B cell (primary cell): ENCODE measurements at regions of chr11 and their contacts with region 1.

Region 1: DNA sequence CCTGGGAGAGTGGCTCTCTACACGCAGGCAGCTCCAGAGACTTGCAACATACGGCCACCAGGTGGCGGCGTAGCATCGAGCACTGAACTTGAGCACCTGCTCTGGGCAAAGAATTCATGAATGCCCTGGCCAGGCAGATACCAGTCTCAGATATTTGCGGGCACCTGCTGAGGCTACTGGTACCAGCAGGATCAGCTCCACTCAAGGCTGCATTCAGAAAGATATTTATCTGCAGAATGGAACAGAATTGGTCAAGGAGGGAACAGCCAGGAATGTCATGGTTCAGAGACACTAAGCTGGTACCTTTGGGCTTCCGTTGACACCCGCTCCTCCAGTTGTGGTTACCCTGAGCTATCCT is 10.8 kb upstream of the CCDC86 start:
- DNase-seq: peak; percentile 85
- ATAC-seq: peak; percentile 86
- H3K4me3 ChIP-seq: peak overlapping the region in 1 of 5 experiments; percentile 3
- H3K4me3 Mint-ChIP-seq: no peak overlapping the region
- H3K27ac ChIP-seq: no peak overlapping the region
- H3K27ac Mint-ChIP-seq: no peak overlapping the region
- H3K4me1 ChIP-seq: peaks cover 0 to 5% of the 10 kb centered on the region in 2 donors
- H3K4me1 Mint-ChIP-seq: peaks cover 5% of the 10 kb centered on the region
- H3K27me3 ChIP-seq: peaks cover 0 to 8% (median 0%) of the 10 kb centered on the region in 4 experiments
- H3K27me3 Mint-ChIP-seq: peaks cover 20% of the 10 kb centered on the region
- CTCF ChIP-seq: peak; percentile 96

Region 2: GRCh38 chr11:60756307-60757032 is 74.7 kb before region 1 on chr11 and contains the start of gene MS4A15:
- CTCF ChIA-PET with region 1: no interaction called
- POLR2A ChIA-PET with region 1: no interaction called
- intact Hi-C with region 1: no loop called
- DNase-seq: peak; percentile 55
- ATAC-seq: no peak
- H3K4me3 ChIP-seq: no peak within 1 kb of the TSS
- H3K4me3 Mint-ChIP-seq: no peak within 1 kb of the TSS
- H3K27ac ChIP-seq: no peak within 1 kb of the TSS
- H3K27ac Mint-ChIP-seq: no peak within 1 kb of the TSS
- H3K4me1 ChIP-seq: peaks cover 3 to 4% of the 10 kb centered on the region in 2 donors
- H3K4me1 Mint-ChIP-seq: peaks cover 23% of the 10 kb centered on the region
- H3K27me3 ChIP-seq: peaks cover 0 to 7% (median 1%) of the 10 kb centered on the region in 4 experiments
- H3K27me3 Mint-ChIP-seq: peaks cover 36% of the 10 kb centered on the region
- CTCF ChIP-seq: peak; percentile 58
- total RNA-seq, gene MS4A15: not detected in 2 replicates

Region 3: DNA sequence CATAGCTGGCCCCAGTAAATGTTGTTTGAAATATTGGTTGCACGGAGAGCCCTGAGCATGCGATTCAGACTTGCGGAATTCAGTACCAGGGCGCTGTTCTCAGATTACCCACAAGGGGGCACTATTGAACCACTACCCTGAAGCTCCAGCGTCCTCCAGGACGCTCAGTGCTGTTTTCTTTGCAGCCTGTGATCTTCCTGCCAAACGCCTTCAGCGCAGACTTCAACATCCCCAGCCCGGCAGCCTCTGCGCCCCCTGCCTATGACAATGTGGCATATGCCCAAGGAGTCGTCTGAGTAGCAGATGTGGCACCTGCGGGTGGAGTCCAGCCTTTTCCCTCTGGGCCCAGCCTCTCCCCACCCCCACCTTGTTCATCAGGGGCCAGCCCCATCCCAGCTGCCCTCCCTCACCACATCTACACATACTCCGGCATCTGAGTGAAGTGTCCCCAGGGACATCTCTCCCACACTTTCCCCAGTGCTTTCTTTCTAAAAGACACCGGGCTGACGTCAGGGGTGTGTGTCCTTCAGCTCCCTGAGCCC is 55.6 kb before region 1 on chr11:
- CTCF ChIA-PET with region 1: interaction called, 19 read pairs
- POLR2A ChIA-PET with region 1: no interaction called
- intact Hi-C with region 1: no loop called
- DNase-seq: peak; percentile 89
- ATAC-seq: peak; percentile 96
- H3K4me3 ChIP-seq: no peak overlapping the region
- H3K4me3 Mint-ChIP-seq: no peak overlapping the region
- H3K27ac ChIP-seq: no peak overlapping the region
- H3K27ac Mint-ChIP-seq: peak overlapping the region; percentile 1
- H3K4me1 ChIP-seq: peaks cover 3 to 11% of the 10 kb centered on the region in 2 donors
- H3K4me1 Mint-ChIP-seq: peaks cover 15% of the 10 kb centered on the region
- H3K27me3 ChIP-seq: peaks cover 0 to 9% (median 1%) of the 10 kb centered on the region in 4 experiments
- H3K27me3 Mint-ChIP-seq: peaks cover 12% of the 10 kb centered on the region
- CTCF ChIP-seq: peak; percentile 88

Region 4: GRCh38 chr11:60887556-60887955 is 56.4 kb after region 1 on chr11:
- CTCF ChIA-PET with region 1: interaction called, 30 read pairs
- POLR2A ChIA-PET with region 1: no interaction called
- intact Hi-C with region 1: loop called (anchors 1 kb)
- DNase-seq: peak; percentile 30
- ATAC-seq: no peak
- H3K4me3 ChIP-seq: no peak overlapping the region
- H3K4me3 Mint-ChIP-seq: no peak overlapping the region
- H3K27ac ChIP-seq: no peak overlapping the region
- H3K27ac Mint-ChIP-seq: no peak overlapping the region
- H3K4me1 ChIP-seq: no peaks in the 10 kb centered on the region
- H3K4me1 Mint-ChIP-seq: no peaks in the 10 kb centered on the region
- H3K27me3 ChIP-seq: no peaks in the 10 kb centered on the region
- H3K27me3 Mint-ChIP-seq: no peaks in the 10 kb centered on the region
- CTCF ChIP-seq: no peak

Region 5: GRCh38 chr11:60970369-60970774 is 139.2 kb after region 1 on chr11:
- CTCF ChIA-PET with region 1: interaction called, 10 read pairs
- POLR2A ChIA-PET with region 1: no interaction called
- intact Hi-C with region 1: no loop called
- DNase-seq: peak; percentile 83
- ATAC-seq: peak; percentile 91
- H3K4me3 ChIP-seq: peak overlapping the region in 1 of 5 experiments; percentile 5
- H3K4me3 Mint-ChIP-seq: peak overlapping the region; percentile 79
- H3K27ac ChIP-seq: no peak overlapping the region
- H3K27ac Mint-ChIP-seq: peak overlapping the region; percentile 71
- H3K4me1 ChIP-seq: peaks cover 27 to 32% of the 10 kb centered on the region in 2 donors
- H3K4me1 Mint-ChIP-seq: peaks cover 34% of the 10 kb centered on the region
- H3K27me3 ChIP-seq: no peaks in the 10 kb centered on the region
- H3K27me3 Mint-ChIP-seq: no peaks in the 10 kb centered on the region
- CTCF ChIP-seq: peak; percentile 94

Region 6: GRCh38 chr11:60982184-60982583 is 151.1 kb after region 1 on chr11:
- CTCF ChIA-PET with region 1: no interaction called
- POLR2A ChIA-PET with region 1: no interaction called
- intact Hi-C with region 1: no loop called
- DNase-seq: no peak
- ATAC-seq: no peak
- H3K4me3 ChIP-seq: no peak overlapping the region
- H3K4me3 Mint-ChIP-seq: no peak overlapping the region
- H3K27ac ChIP-seq: no peak overlapping the region
- H3K27ac Mint-ChIP-seq: no peak overlapping the region
- H3K4me1 ChIP-seq: peaks cover 22 to 35% of the 10 kb centered on the region in 2 donors
- H3K4me1 Mint-ChIP-seq: peaks cover 37% of the 10 kb centered on the region
- H3K27me3 ChIP-seq: no peaks in the 10 kb centered on the region
- H3K27me3 Mint-ChIP-seq: no peaks in the 10 kb centered on the region
- CTCF ChIP-seq: no peak

Region 7: DNA sequence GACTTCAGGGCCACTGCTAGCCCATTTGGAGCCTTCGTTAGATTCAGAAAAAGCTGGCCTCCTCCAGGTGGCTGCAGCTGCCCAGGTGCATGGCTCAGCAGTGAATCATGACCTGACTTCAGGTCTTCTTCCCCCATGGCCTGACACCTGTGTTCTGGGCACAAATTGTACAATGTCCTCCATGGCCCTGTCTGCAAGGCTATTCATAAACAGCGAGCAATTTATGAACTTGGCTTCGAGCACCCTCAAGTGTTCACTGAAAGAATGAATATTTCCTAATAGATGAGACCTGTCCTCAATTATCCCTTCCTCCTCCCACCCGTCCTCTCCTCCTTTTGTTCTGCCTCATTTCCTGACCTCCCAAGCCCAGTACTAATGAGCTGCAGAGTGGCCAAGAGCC is 342.3 kb after region 1 on chr11:
- CTCF ChIA-PET with region 1: interaction called, 10 read pairs
- POLR2A ChIA-PET with region 1: no interaction called
- intact Hi-C with region 1: loop called (anchors 5 kb)
- DNase-seq: no peak
- ATAC-seq: no peak
- H3K4me3 ChIP-seq: no peak overlapping the region
- H3K4me3 Mint-ChIP-seq: no peak overlapping the region
- H3K27ac ChIP-seq: no peak overlapping the region
- H3K27ac Mint-ChIP-seq: no peak overlapping the region
- H3K4me1 ChIP-seq: peaks cover 21% of the 10 kb centered on the region in 2 donors
- H3K4me1 Mint-ChIP-seq: peaks cover 23% of the 10 kb centered on the region
- H3K27me3 ChIP-seq: no peaks in the 10 kb centered on the region
- H3K27me3 Mint-ChIP-seq: peaks cover 14% of the 10 kb centered on the region
- CTCF ChIP-seq: no peak

Region 8: GRCh38 chr11:61294717-61295595 is 463.8 kb after region 1 on chr11 and contains the start of gene VWCE:
- CTCF ChIA-PET with region 1: interaction called, 6 read pairs
- POLR2A ChIA-PET with region 1: no interaction called
- intact Hi-C with region 1: loop called (anchors 1 kb)
- DNase-seq: peak; percentile 78
- ATAC-seq: peak; percentile 84
- H3K4me3 ChIP-seq: peak within 1 kb of the TSS; percentile 26 to 74 (median 54)
- H3K4me3 Mint-ChIP-seq: peak within 1 kb of the TSS; percentile 88
- H3K27ac ChIP-seq: no peak within 1 kb of the TSS
- H3K27ac Mint-ChIP-seq: peak within 1 kb of the TSS; percentile 37
- H3K4me1 ChIP-seq: peaks cover 8 to 21% of the 10 kb centered on the region in 2 donors
- H3K4me1 Mint-ChIP-seq: peaks cover 14% of the 10 kb centered on the region
- H3K27me3 ChIP-seq: no peaks in the 10 kb centered on the region
- H3K27me3 Mint-ChIP-seq: no peaks in the 10 kb centered on the region
- CTCF ChIP-seq: peak; percentile 33
- total RNA-seq, gene VWCE: 0.37 and 0.41 TPM in 2 replicates